ENCODE measurements at regions of chr12 and their contacts with region 1.

Region 1: GRCh38 chr12:47837190-47838171 is 17.8 kb upstream of the HDAC7 start:
- DNase-seq: peak; percentile 75
- H3K4me3 ChIP-seq: no peak overlapping the region
- H3K27ac ChIP-seq: no peak overlapping the region
- H3K4me1 ChIP-seq: peaks cover 5% of the 10 kb centered on the region; the same call in 1 of the 2 replicates
- H3K27me3 ChIP-seq: no peaks in the 10 kb centered on the region

Region 2: GRCh38 chr12:47458270-47458669 is 379.2 kb before region 1 on chr12:
- in situ Hi-C with region 1: no loop called
- DNase-seq: no peak
- H3K4me3 ChIP-seq: no peak overlapping the region
- H3K27ac ChIP-seq: no peak overlapping the region
- H3K4me1 ChIP-seq: no peaks in the 10 kb centered on the region
- H3K27me3 ChIP-seq: peaks cover 6% of the 10 kb centered on the region; the same call in 1 of the 2 replicates

Region 3: DNA sequence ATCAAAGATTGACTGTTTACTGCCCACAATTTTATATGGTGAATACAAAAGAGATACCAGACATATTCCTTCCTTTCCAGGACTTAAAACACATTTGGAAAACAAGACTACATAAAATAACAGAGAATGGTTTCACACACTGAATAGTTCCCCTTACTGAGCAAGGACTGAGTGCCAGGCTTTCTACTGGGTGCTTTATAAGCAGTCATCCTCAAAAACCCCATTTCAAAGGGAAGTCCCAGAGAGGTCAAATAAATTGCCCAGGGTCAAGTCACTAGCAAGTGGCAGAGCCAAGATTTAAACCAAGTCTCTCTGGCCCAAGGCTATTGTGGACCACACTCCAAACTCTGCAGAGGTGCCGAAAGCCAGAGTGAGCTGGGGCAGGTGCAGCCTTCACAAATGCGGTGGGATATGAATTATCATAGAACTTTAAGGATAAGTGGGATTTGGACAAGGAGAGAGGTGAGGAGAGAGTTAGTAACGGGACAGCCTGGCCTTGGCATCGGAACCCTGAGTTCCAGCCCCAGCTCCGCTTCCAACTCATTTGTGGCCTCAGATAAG is 122.6 kb before region 1 on chr12:
- in situ Hi-C with region 1: loop called (anchors 5 kb)
- DNase-seq: no peak
- H3K4me3 ChIP-seq: no peak overlapping the region
- H3K27ac ChIP-seq: no peak overlapping the region
- H3K4me1 ChIP-seq: peaks cover 16% of the 10 kb centered on the region
- H3K27me3 ChIP-seq: no peaks in the 10 kb centered on the region

Region 4: DNA sequence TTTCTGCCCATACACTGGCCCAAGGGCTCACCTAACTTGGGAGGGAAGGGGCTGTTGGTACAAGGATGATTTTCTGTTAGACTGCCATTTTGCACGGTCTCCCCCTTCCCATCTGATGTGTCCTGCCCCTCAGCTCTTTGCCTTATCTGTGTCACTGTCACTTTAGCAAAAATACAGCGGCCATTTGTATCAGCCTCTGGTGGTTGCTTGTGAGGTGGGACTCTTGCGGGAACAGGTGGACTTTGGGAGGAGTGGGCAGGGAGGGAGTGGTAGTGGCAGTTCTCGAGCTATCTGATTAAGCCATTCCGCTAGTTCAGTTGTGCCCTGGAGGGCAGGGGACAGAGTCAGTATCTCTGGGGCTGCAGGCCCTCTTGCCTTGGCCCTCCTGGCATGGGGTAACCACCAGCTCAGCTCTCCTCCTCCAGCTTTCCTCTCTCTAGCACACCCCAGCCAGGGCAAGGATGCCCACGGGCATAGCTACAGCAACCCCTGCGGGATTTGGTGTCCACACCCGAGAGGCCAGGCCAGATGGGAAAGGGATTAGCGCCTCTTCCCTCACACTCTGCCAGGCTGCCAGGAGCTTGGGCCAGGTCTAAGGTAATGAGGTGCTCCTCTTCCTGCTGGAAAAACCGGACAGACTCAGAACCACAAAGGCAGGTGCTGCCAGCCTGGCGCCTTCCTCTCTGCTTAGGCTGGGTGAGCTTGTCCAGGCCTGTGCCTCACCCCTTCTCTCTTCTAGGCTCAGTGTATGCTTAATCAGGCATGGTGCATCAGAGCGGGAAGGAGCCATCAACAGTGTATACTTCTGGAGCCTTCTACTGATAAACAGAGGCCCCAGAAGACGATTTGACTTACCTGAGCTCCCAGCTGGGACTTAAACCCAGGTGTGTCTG is 55.8 kb before region 1 on chr12:
- in situ Hi-C with region 1: loop called (anchors 10 kb)
- DNase-seq: no peak
- H3K4me3 ChIP-seq: no peak overlapping the region
- H3K27ac ChIP-seq: no peak overlapping the region
- H3K4me1 ChIP-seq: peaks cover 17% of the 10 kb centered on the region
- H3K27me3 ChIP-seq: no peaks in the 10 kb centered on the region